ENCODE measurements at regions of chr7 and their contacts with region 1.

Region 1: GRCh38 chr7:143240291-143241168 is 18.7 kb downstream of the TAS2R40 start:
- DNase-seq: peak; percentile 78

Region 2: DNA sequence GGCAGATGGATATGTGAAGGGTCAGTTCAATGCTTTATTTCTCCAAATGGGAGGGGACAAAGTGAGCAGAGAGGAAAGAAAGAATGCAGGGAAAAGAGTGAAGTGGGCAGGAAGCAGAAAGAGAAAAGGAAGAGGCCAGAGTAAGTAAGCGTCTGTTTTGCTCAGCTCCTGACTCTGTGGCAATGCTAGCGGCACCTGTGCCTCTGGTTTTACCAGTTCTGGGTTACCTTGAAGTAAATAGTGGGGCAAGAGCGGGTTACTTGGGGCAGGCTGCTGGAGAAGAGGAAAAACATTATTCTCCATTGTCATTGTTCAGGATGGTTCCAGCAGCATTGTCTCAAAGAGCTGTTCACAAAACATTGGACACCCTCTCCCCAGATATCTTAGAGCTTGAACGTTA is 16.7 kb before region 1 on chr7:
- CTCF ChIA-PET with region 1: interaction called, 16 read pairs
- POLR2A ChIA-PET with region 1: no interaction called
- DNase-seq: no peak

Region 3: DNA sequence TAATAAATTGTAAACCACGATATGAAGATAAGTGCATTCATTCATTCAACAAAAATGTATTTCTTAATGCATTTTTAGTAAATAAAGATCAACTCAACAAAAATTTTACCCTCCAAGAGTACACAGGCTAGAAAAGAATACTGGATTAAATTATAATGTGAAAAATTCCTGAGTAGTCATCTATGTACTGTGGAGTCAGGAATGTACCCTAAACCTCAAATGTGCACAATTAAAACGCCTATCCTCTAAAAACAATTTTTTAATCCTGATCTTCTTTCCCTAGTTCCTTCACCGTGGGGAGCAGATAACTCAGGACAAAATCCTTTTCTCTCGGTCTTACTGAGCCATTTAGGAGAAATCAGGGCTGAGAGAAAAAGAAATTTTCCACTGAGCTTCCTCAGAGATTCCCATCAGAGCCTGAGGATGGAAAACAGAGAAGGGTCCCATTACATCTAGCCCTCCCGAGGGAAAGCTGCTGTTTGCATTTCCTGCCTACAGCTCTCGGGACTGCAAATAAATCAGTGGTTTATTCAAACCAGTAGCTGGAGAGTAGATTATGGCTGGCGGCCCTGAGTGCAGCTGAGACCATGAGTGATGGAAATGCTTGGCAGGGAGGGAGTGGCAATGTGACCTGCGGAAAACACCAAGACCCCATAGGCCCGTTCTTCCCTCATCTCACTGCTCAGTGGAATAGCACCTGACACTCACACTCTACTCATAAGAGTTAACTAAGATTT is 11.3 kb before region 1 on chr7:
- CTCF ChIA-PET with region 1: interaction called, 12 read pairs
- POLR2A ChIA-PET with region 1: no interaction called
- DNase-seq: no peak

Region 4: DNA sequence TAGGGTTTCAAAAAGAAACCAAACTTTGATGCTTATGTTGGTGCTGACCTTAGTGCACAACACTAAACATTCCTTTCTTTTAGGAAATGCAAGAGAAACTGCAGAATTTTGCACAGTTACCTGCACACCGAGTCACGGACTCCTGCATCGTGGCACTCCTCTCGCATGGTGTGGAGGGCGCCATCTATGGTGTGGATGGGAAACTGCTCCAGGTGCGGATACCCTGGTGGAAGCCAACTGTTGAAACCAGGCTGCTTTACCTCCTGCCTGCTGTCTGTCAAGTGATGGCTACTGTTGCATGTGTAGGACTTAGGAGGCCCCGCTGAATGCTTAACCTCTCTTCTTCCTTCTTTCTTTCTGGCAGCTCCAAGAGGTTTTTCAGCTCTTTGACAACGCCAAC is 59.3 kb after region 1 on chr7:
- CTCF ChIA-PET with region 1: interaction called, 16 read pairs
- POLR2A ChIA-PET with region 1: no interaction called
- DNase-seq: peak; percentile 69

Region 5: GRCh38 chr7:143305423-143306070 is 65.0 kb after region 1 on chr7:
- CTCF ChIA-PET with region 1: interaction called, 16 read pairs
- POLR2A ChIA-PET with region 1: no interaction called
- DNase-seq: peak; percentile 85

Region 6: DNA sequence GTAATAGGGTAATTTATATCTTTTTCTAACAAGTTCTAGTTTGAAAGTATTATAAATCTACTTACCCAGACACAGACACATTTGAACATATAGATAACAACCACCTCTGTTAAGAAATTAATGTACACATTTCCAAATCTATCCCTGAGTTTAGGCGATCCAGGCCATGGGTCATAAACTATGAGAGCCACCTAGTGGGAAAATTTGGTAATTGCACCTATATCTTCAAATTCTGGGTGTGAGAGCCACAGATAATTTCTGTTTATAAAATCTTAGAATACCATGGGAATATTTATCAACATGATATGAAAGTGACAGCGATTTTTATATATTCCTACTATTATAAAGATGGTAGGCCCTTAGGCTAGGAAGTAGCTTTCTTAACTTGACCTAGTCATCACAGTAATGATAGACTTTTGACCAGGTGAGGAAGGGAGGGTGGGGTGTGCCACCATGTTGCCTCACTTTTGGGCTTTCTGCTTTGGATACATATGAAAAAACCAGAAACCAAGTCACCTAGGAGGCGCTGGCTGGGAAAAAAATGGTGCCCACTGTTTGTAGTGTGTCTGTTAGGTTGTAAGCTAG is 176.1 kb after region 1 on chr7:
- CTCF ChIA-PET with region 1: interaction called, 21 read pairs
- POLR2A ChIA-PET with region 1: no interaction called
- DNase-seq: peak; percentile 74